Transverse colon (tissue), 4 donors: ENCODE measurements at regions of chr18 and their contacts with region 1.

Region 1: DNA sequence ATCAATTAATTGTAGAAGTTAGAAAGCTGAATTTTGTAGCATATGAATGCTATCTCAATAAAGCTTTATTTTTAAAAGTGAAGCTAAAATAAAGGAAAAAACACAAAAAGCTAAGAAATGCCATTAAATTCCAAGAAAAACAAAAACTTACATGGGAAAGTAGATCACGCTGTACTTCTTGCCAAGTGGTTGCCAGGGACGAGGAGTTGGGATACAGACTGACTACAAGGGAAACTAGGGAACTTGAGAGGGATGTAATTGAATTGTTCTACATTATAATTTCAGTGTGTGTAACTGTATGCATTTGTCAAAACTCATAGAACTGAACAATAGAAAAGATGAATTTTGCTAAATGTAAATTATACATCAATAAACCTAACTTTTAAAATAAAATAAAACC is 108.1 kb downstream of the DYM start:
- DNase-seq: no peak
- H3K4me3 ChIP-seq: no peak overlapping the region
- H3K27ac ChIP-seq: no peak overlapping the region
- H3K4me1 ChIP-seq: no peaks in the 10 kb centered on the region
- H3K27me3 ChIP-seq: no peaks in the 10 kb centered on the region
- CTCF ChIP-seq: no peak
- EP300 ChIP-seq: no peak
- POLR2A ChIP-seq: no peak

Region 2: DNA sequence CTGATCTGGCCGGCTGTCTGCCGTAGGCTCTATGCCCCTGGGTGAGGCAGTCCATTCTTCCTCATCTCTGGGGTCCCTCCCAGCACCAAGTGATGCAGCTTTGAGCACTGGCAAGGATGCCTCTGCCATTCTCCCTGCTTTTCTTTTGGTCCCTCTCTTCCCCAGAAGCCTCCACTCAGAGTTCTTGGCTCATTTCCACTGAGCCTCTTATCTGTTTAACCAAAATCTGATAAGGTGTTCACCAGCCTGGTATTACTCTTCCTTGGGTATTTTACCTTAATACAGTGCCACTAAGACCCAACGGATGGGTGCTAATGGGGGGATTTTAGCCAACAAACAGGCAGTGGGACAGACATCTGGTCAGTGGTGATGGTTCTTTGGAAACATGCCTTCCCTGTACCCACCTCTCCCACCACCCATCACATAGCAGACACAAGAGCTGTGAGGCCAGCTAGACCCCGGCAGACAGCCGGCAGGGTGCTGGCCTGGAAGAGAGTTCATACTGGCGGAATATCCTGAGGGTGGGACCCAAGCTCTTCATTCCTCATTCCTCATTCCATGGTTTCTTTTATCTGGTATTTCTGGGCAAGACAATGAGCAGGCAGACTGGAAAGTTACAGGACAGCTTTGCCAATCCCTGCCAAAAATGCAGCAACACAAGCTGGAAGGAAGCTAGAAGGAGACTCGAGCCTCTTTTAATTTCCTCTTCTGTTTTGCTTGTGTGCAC is 977.7 kb before region 1 on chr18:
- in situ Hi-C with region 1: no loop called
- intact Hi-C with region 1: loop called (anchors 5 kb)
- DNase-seq: no peak
- H3K4me3 ChIP-seq: no peak overlapping the region
- H3K27ac ChIP-seq: no peak overlapping the region
- H3K4me1 ChIP-seq: no peaks in the 10 kb centered on the region
- H3K27me3 ChIP-seq: no peaks in the 10 kb centered on the region
- CTCF ChIP-seq: no peak
- EP300 ChIP-seq: no peak
- POLR2A ChIP-seq: no peak

Region 3: GRCh38 chr18:48800876-48801727 is 551.2 kb before region 1 on chr18:
- in situ Hi-C with region 1: no loop called
- intact Hi-C with region 1: no loop called
- DNase-seq: peak; percentile 8
- H3K4me3 ChIP-seq: no peak overlapping the region
- H3K27ac ChIP-seq: peak overlapping the region; percentile 42 to 61 (median 52)
- H3K4me1 ChIP-seq: peaks cover 6 to 22% (median 18%) of the 10 kb centered on the region in 4 donors
- H3K27me3 ChIP-seq: no peaks in the 10 kb centered on the region
- CTCF ChIP-seq: no peak
- EP300 ChIP-seq: no peak
- POLR2A ChIP-seq: no peak